PC-9 (cell line): ENCODE measurements at regions of chr6 and their contacts with region 1.

Region 1: GRCh38 chr6:79152269-79152737 is 74.2 kb upstream of the PHIP start:
- DNase-seq: no peak
- H3K4me3 ChIP-seq: no peak overlapping the region
- H3K27ac ChIP-seq: no peak overlapping the region
- H3K4me1 ChIP-seq: no peaks in the 10 kb centered on the region
- H3K27me3 ChIP-seq: no peaks in the 10 kb centered on the region
- CTCF ChIP-seq: no peak

Region 2: GRCh38 chr6:79005024-79005423 is 147.3 kb before region 1 on chr6:
- CTCF ChIA-PET with region 1: no interaction called
- POLR2A ChIA-PET with region 1: no interaction called
- intact Hi-C with region 1: no loop called
- DNase-seq: no peak
- H3K4me3 ChIP-seq: no peak overlapping the region
- H3K27ac ChIP-seq: no peak overlapping the region
- H3K4me1 ChIP-seq: no peaks in the 10 kb centered on the region
- H3K27me3 ChIP-seq: no peaks in the 10 kb centered on the region
- CTCF ChIP-seq: no peak

Region 3: DNA sequence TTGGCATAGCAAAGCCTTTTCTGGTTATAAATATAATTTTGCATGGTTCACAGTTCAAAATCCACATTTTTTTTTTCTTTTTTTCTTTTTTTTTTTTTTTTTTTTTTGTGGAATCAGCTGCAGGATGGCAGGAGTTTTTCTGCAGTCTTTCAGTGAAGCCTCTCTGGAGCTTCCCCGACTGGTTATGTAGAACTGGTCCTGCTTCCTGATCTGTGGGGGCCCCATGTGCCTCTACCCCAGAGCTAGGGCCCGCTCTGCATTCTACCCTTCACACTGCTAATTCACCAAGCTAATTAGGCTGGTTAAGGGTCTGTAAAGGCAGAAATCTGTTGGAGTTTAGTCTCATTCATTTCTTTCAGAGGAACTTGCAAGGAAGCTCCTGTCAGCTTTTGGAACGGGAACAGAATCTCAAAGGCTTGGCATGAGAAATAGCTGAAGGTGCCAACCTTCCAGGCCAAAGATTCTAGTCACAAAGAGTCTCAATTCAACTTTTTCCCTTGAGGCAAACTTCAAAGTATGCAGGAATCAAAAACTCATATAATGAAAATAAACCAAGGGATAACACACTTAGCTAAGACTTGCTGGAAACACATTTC is 36.7 kb after region 1 on chr6:
- CTCF ChIA-PET with region 1: no interaction called
- POLR2A ChIA-PET with region 1: interaction called, 10 read pairs
- intact Hi-C with region 1: no loop called
- DNase-seq: no peak
- H3K4me3 ChIP-seq: no peak overlapping the region
- H3K27ac ChIP-seq: no peak overlapping the region
- H3K4me1 ChIP-seq: no peaks in the 10 kb centered on the region
- H3K27me3 ChIP-seq: no peaks in the 10 kb centered on the region
- CTCF ChIP-seq: no peak

Region 4: DNA sequence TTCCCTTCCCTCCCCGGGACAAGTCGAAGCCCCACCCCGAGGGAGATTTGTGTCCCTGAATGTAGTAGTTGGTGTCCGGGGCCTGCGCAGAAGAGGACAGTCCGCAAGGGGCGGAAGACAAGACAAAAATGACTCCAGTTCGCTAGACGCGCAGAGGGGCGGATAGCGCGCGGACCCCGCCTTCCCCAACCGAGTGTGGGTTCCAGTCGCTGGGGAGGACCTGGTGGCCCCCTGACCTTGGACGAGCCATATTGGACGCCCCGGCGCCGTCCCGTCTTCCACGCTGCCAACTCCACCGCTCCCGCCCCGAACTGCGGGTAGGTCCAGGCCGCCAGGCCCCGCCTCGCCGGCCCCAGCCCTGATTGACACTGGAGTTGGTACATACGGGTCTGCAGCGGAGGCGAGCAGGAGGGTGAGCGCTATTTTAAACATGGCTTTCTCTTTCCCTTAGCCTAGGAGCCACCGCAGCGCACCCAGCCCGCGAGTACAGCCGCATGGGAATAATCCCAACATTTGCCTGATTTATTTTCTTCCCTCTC is 81.4 kb after region 1 on chr6:
- CTCF ChIA-PET with region 1: no interaction called
- POLR2A ChIA-PET with region 1: no interaction called
- intact Hi-C with region 1: no loop called
- DNase-seq: peak; percentile 66 to 80
- H3K4me3 ChIP-seq: peak overlapping the region; percentile 92
- H3K27ac ChIP-seq: peak overlapping the region; percentile 6; the same call in 1 of the 2 replicates
- H3K4me1 ChIP-seq: peaks cover 10% of the 10 kb centered on the region
- H3K27me3 ChIP-seq: no peaks in the 10 kb centered on the region
- CTCF ChIP-seq: 0 out of 2 replicates have a peak, but pooled peaks have one; percentile 25